H1 (cell line): ENCODE measurements at regions of chr7 and their contacts with region 1.

Region 1: GRCh38 chr7:76201730-76202665 is at the start of gene SRRM3:
- DNase-seq: peak in 1 of 2 experiments; percentile 98
- H3K4me3 ChIP-seq: peak within 1 kb of the TSS; percentile 26 to 71 (median 46)
- H3K27ac ChIP-seq: no peak within 1 kb of the TSS
- H3K4me1 ChIP-seq: peaks cover 0 to 8% (median 6%) of the 10 kb centered on the region in 4 experiments; a peak in 5 of 7 replicates
- H3K27me3 ChIP-seq: 0 out of 7 replicates have a peak, but pooled peaks cover 0 to 2% (median 0%) of the 10 kb centered on the region in 4 experiments
- CTCF ChIP-seq: peak; percentile 80 to 89 (median 87)
- EP300 ChIP-seq: peak in 1 of 2 experiments; percentile 83; a peak in 1 of 3 replicates
- POLR2A ChIP-seq: no peak
- RAD21 ChIP-seq: peak; percentile 25 to 57; a peak in 3 of 4 replicates
- total RNA-seq, gene SRRM3: 16.0 and 17.4 TPM in 2 replicates

Region 2: GRCh38 chr7:76185187-76185896 is 16.7 kb before region 1 on chr7:
- CTCF ChIA-PET with region 1: interaction called, 50 read pairs
- POLR2A ChIA-PET with region 1: interaction called, 5 read pairs
- DNase-seq: peak in 1 of 2 experiments; percentile 75
- H3K4me3 ChIP-seq: no peak overlapping the region; a peak in 1 of 8 replicates
- H3K27ac ChIP-seq: peak overlapping the region; percentile 56; the same call in 1 of the 2 replicates
- H3K4me1 ChIP-seq: peaks cover 0 to 11% (median 8%) of the 10 kb centered on the region in 4 experiments; a peak in 6 of 7 replicates
- H3K27me3 ChIP-seq: no peaks in the 10 kb centered on the region
- CTCF ChIP-seq: no peak
- EP300 ChIP-seq: no peak
- POLR2A ChIP-seq: no peak; a peak in 1 of 3 replicates
- RAD21 ChIP-seq: no peak

Region 3: GRCh38 chr7:76220185-76221057 is 18.4 kb after region 1 on chr7:
- CTCF ChIA-PET with region 1: interaction called, 51 read pairs
- POLR2A ChIA-PET with region 1: interaction called, 5 read pairs
- DNase-seq: peak; percentile 62 to 84
- H3K4me3 ChIP-seq: peak overlapping the region in 1 of 4 experiments; percentile 10; a peak in 2 of 8 replicates
- H3K27ac ChIP-seq: peak overlapping the region; percentile 64; the same call in 1 of the 2 replicates
- H3K4me1 ChIP-seq: peaks cover 19 to 45% (median 22%) of the 10 kb centered on the region in 4 experiments
- H3K27me3 ChIP-seq: no peaks in the 10 kb centered on the region
- CTCF ChIP-seq: peak; percentile 31 to 50 (median 49); a peak in 3 of 4 replicates
- EP300 ChIP-seq: peak in 1 of 2 experiments; percentile 20; a peak in 1 of 3 replicates
- POLR2A ChIP-seq: peak in 1 of 2 experiments; percentile 49; a peak in 1 of 3 replicates
- RAD21 ChIP-seq: peak; percentile 53 to 68

Region 4: DNA sequence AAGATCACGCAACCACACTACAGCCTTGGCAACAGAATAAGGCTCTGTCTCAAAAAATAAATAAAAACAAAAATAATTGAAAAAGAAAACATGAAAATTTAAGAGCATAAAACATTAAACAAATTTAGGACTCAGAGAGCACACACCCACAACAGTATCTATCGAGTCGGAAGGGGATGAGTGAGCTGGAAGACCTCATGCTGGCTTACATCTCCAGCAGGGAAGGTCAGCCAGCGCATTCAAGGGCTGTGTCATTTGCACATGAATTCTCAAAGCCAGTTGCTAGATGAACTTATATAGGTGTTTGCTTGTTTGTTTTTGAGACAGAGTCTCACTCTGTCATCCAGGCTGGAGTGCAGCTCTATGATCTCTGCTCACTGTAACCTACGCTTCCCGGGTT is 50.0 kb after region 1 on chr7:
- CTCF ChIA-PET with region 1: interaction called, 20 read pairs
- POLR2A ChIA-PET with region 1: interaction called, 3 read pairs
- DNase-seq: no peak
- H3K4me3 ChIP-seq: no peak overlapping the region
- H3K27ac ChIP-seq: no peak overlapping the region
- H3K4me1 ChIP-seq: peaks cover 1 to 6% (median 3%) of the 10 kb centered on the region in 4 experiments; a peak in 2 of 7 replicates
- H3K27me3 ChIP-seq: no peaks in the 10 kb centered on the region
- CTCF ChIP-seq: no peak
- EP300 ChIP-seq: no peak
- POLR2A ChIP-seq: no peak
- RAD21 ChIP-seq: no peak

Region 5: DNA sequence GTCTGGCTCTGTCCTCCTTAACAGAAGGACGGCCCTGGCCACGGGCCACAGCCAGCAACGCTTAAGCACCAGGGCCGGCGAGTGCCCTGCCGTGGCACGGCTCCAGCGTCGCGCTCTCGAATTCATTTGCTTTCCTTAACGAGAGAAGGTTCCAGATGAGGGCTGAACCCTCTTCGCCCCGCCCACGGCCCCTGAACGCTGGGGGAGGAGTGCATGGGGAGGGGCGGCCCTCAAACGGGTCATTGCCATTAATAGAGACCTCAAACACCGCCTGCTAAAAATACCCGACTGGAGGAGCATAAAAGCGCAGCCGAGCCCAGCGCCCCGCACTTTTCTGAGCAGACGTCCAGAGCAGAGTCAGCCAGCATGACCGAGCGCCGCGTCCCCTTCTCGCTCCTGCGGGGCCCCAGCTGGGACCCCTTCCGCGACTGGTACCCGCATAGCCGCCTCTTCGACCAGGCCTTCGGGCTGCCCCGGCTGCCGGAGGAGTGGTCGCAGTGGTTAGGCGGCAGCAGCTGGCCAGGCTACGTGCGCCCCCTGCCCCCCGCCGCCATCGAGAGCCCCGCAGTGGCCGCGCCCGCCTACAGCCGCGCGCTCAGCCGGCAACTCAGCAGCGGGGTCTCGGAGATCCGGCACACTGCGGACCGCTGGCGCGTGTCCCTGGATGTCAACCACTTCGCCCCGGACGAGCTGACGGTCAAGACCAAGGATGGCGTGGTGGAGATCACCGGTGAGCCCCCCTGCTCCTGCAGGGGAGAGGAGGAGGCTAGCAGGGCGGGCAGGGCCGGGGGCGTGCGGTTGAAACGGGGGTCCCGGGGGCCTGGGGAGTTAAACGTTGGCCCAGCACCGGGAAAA is 100.6 kb after region 1 on chr7 and contains the start of gene HSPB1:
- CTCF ChIA-PET with region 1: interaction called, 14 read pairs
- POLR2A ChIA-PET with region 1: no interaction called
- DNase-seq: peak in 1 of 2 experiments; percentile 87
- H3K4me3 ChIP-seq: peak within 1 kb of the TSS; percentile 44 to 68 (median 48)
- H3K27ac ChIP-seq: no peak within 1 kb of the TSS
- H3K4me1 ChIP-seq: peaks cover 0 to 8% (median 3%) of the 10 kb centered on the region in 4 experiments; a peak in 2 of 7 replicates
- H3K27me3 ChIP-seq: peaks cover 0 to 6% (median 4%) of the 10 kb centered on the region in 4 experiments; a peak in 3 of 7 replicates
- CTCF ChIP-seq: no peak; a peak in 1 of 4 replicates
- EP300 ChIP-seq: no peak
- POLR2A ChIP-seq: peak in 1 of 2 experiments; percentile 53; a peak in 1 of 3 replicates
- RAD21 ChIP-seq: no peak
- total RNA-seq, gene HSPB1: 165 and 194 TPM in 2 replicates

Region 6: GRCh38 chr7:76515999-76516443 is 314.0 kb after region 1 on chr7:
- CTCF ChIA-PET with region 1: no interaction called
- POLR2A ChIA-PET with region 1: no interaction called
- DNase-seq: no peak
- H3K4me3 ChIP-seq: no peak overlapping the region
- H3K27ac ChIP-seq: no peak overlapping the region
- H3K4me1 ChIP-seq: peaks cover 0 to 7% (median 3%) of the 10 kb centered on the region in 4 experiments; a peak in 3 of 7 replicates
- H3K27me3 ChIP-seq: no peaks in the 10 kb centered on the region
- CTCF ChIP-seq: no peak
- EP300 ChIP-seq: no peak
- POLR2A ChIP-seq: no peak
- RAD21 ChIP-seq: no peak